Uterus (tissue), 4 donors: ENCODE measurements at regions of chr6 and their contacts with region 1.

Region 1: GRCh38 chr6:117555882-117556498 is 46.3 kb downstream of the GOPC start:
- DNase-seq: peak; percentile 20 to 50
- H3K4me3 ChIP-seq: no peak overlapping the region
- H3K27ac ChIP-seq: no peak overlapping the region
- H3K4me1 ChIP-seq: no peaks in the 10 kb centered on the region
- H3K27me3 ChIP-seq: no peaks in the 10 kb centered on the region
- CTCF ChIP-seq: peak; percentile 65 to 92 (median 76)
- POLR2A ChIP-seq: no peak

Region 2: DNA sequence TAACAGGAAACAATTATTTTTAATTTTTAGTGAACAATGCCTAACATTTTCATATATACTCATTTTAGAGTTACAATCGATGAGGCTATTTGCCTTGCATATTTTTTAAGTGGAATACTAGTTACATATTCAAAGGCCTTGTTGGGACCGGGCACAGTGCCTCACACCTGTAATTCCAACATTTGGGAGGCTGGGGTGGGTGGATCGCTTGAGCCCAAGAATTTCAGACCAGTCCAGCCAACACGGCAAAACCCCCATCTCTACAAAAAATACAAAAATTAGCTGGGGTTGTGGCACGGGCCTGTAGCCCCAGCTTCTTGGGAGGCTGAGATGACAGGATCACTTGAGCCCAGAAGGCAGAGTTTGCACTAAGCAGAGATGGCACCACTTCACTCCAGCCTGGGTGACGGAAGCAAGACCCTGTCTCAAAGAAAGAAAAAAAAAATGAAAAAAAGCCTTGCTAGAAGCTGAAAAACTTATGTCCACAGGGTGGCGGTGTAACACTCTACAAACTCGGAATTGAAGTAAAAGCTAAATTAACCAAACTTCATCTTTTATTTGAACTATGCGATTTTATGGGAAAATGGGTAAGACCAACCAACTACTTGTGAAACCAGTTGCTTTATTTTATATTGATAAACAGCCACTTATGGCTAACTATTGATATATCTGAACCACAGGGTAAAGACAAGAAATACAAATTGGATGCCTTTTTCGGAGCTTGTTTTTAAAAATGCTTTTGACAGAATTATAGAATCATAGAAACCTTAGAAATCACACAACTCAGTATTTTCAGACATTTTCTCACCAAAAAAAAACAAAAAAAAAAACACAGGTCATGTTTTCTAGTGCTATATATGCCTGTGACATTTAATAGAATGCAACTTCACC is 106.2 kb before region 1 on chr6:
- intact Hi-C with region 1: loop called (anchors 10 kb)
- DNase-seq: peak; percentile 21 to 53
- H3K4me3 ChIP-seq: no peak overlapping the region
- H3K27ac ChIP-seq: no peak overlapping the region
- H3K4me1 ChIP-seq: no peaks in the 10 kb centered on the region
- H3K27me3 ChIP-seq: no peaks in the 10 kb centered on the region
- CTCF ChIP-seq: peak; percentile 55 to 75 (median 68)
- POLR2A ChIP-seq: no peak

Region 3: DNA sequence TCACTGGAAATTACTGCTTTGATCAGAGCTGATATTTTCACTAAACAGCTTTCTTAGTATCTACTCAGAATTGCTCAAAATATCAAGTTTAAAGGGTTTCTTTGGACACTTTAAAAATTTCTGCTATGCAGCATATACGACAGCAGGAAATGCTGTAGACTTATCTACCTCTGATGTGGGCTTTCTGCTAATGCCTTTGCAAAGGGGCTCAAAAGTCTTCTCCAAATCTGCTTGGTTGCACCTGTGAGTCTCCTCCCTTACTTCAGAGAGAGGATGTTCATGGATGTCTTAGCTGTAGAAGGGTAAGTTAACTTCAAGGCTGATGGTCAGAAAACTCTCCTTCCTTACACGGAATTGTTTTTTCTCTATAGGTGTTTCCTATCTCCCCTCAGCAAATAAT is 99.4 kb after region 1 on chr6:
- intact Hi-C with region 1: no loop called
- DNase-seq: no peak
- H3K4me3 ChIP-seq: no peak overlapping the region
- H3K27ac ChIP-seq: no peak overlapping the region
- H3K4me1 ChIP-seq: no peaks in the 10 kb centered on the region
- H3K27me3 ChIP-seq: no peaks in the 10 kb centered on the region
- CTCF ChIP-seq: no peak
- POLR2A ChIP-seq: no peak

Region 4: GRCh38 chr6:118288355-118289124 is 732.5 kb after region 1 on chr6:
- intact Hi-C with region 1: no loop called
- DNase-seq: no peak
- H3K4me3 ChIP-seq: no peak overlapping the region
- H3K27ac ChIP-seq: no peak overlapping the region
- H3K4me1 ChIP-seq: no peaks in the 10 kb centered on the region
- H3K27me3 ChIP-seq: no peaks in the 10 kb centered on the region
- CTCF ChIP-seq: peak in 1 of 4 experiments; percentile 24
- POLR2A ChIP-seq: no peak